ENCODE measurements at regions of chr1 and their contacts with region 1.

Region 1: DNA sequence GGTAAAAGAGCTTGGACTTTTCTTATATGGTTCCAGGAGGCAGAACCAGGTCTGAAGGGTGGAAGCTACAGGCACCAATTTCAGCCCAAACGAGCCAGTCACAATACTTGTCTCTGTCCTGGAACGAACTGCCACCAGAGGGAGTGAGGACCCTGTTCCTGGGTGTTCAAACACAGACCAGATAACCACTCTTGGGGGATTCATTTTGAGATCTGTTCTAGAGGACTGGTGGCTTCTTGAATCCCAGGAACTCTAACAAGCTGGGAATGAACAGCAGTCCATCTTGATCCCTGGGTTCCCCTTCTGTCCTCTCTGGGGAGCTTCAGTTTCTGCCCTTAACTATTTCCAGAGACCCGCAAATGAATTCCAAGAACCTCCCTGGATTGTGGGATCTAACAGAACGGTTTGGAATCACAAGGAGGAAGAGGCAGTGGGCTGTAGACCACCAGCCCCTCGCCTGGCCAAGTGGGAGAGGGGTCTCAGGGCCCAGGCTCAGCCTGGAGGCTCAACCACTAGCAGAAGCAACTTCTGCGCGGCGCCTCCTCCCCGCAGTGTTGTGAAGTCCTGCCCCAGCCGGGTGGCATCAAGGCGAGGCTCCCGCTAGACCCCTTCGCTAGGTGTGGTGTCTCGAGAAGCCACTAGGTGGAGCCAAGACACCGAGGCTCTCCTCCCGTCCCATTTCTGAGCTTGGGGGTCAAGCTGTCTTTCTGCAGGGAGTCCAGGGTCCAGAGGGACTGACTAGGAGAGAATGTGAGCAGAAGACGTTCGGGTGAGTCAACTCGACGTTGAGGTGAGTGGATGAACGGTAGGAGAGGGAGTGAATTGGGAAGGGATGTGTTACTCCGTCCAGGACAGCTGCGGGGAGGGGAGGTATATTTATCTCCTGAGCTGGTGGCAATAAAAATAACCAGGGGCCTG is 12.1 kb upstream of the NES start:
- DNase-seq: peak; percentile 90
- ATAC-seq: peak; percentile 51
- H3K4me3 Mint-ChIP-seq: peak overlapping the region; percentile 74
- H3K27ac Mint-ChIP-seq: peak overlapping the region; percentile 25; the same call in 1 of the 2 replicates
- H3K4me1 Mint-ChIP-seq: peaks cover 57% of the 10 kb centered on the region
- H3K27me3 Mint-ChIP-seq: peaks cover 7% of the 10 kb centered on the region; the same call in 1 of the 2 replicates
- CTCF ChIP-seq: peak; percentile 87

Region 2: DNA sequence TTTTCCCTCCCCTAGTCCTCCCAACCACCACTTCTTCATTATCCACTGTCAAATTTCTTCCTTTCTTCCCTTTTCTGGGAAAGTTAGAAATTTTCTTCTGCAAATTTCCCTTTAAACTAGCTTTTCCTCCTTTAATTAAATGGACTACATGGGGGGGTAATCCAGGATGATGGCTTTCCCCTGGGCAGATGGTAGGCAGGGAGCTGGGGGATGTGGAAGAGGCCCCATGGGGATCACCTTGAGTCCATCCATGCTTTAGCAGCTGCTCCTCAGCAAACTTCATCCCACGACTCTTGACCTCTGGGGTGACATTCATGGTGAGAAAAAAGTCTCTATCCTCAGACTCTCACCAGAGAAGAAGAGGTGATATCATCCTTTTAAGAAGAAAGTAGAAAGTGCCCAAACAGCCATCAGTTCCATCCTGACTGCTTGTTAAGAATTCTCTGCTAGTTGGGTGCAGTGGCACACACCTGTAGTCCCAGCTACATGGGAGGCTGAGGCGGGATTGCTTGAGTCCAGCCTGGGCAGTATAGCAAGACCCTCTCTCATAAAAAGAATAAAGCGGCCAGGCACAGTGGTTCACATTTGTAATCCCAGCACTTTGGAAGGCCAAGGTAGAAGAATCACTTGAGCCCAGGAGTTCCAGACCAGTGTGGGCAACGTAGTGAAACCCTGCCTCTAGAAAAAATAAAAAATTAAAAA is 90.4 kb before region 1 on chr1:
- CTCF ChIA-PET with region 1: no interaction called
- POLR2A ChIA-PET with region 1: no interaction called
- DNase-seq: no peak
- ATAC-seq: no peak
- H3K4me3 Mint-ChIP-seq: no peak overlapping the region
- H3K27ac Mint-ChIP-seq: no peak overlapping the region
- H3K4me1 Mint-ChIP-seq: peaks cover 13% of the 10 kb centered on the region
- H3K27me3 Mint-ChIP-seq: no peaks in the 10 kb centered on the region
- CTCF ChIP-seq: no peak

Region 3: DNA sequence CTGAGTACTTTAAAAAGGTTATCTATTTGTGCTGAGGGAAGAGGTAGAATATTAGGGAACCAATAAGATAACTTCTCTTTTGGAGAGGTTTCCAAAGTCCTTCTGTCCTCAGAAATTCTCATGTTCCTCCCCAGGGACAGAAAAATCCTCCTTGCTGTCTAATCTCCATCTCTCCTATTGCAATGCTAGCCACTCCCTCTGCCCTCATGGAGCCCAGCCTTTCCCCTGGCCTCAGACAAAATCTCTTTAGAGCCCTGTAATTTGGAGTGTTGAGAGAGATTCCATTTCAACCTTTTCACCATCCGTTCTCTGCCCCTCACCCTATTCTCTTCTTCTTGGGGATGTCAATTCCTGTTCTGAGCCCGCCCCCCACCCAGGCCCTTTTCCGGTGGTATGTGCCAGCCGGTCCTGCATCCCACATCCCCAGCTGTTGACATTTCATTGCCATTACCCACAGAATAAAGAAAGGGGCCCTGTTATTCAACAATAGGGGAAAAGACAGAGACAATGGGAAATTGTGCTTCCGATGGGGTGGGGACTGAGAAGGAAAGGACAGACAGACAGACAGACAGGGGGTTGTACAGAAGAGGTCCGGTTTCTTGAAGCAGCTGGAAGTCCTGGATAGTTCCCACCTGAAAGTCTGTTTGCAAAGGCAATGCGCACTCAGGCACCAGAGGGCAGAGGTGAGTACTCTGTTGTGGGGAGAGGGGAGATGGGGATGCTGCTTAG is 70.3 kb before region 1 on chr1 and contains the start of gene HAPLN2:
- CTCF ChIA-PET with region 1: interaction called, 54 read pairs
- POLR2A ChIA-PET with region 1: no interaction called
- DNase-seq: peak; percentile 79
- ATAC-seq: peak; percentile 86
- H3K4me3 Mint-ChIP-seq: no peak within 1 kb of the TSS
- H3K27ac Mint-ChIP-seq: no peak within 1 kb of the TSS
- H3K4me1 Mint-ChIP-seq: peaks cover 7% of the 10 kb centered on the region
- H3K27me3 Mint-ChIP-seq: peaks cover 58% of the 10 kb centered on the region
- CTCF ChIP-seq: no peak
- total RNA-seq, gene HAPLN2: 1.1 to 1.3 TPM (median 1.2 TPM) in 3 replicates

Region 4: GRCh38 chr1:156667610-156667967 is 21.7 kb before region 1 on chr1:
- CTCF ChIA-PET with region 1: interaction called, 437 read pairs
- POLR2A ChIA-PET with region 1: interaction called, 5 read pairs
- DNase-seq: no peak
- ATAC-seq: no peak
- H3K4me3 Mint-ChIP-seq: no peak overlapping the region
- H3K27ac Mint-ChIP-seq: peak overlapping the region; percentile 76
- H3K4me1 Mint-ChIP-seq: peaks cover 88% of the 10 kb centered on the region
- H3K27me3 Mint-ChIP-seq: peaks cover 4% of the 10 kb centered on the region; the same call in 1 of the 2 replicates
- CTCF ChIP-seq: no peak

Region 5: GRCh38 chr1:156740679-156741612 is 51.7 kb after region 1 on chr1 and contains the start of gene MRPL24:
- CTCF ChIA-PET with region 1: interaction called, 25 read pairs
- POLR2A ChIA-PET with region 1: interaction called, 7 read pairs
- DNase-seq: peak; percentile 98
- ATAC-seq: peak; percentile 86
- H3K4me3 Mint-ChIP-seq: peak within 1 kb of the TSS; percentile 90
- H3K27ac Mint-ChIP-seq: peak within 1 kb of the TSS; percentile 100
- H3K4me1 Mint-ChIP-seq: peaks cover 25% of the 10 kb centered on the region
- H3K27me3 Mint-ChIP-seq: no peaks in the 10 kb centered on the region
- CTCF ChIP-seq: no peak
- total RNA-seq, gene MRPL24: 35.1 to 37.4 TPM (median 35.2 TPM) in 3 replicates

Region 6: GRCh38 chr1:156797212-156797871 is 108.0 kb after region 1 on chr1:
- CTCF ChIA-PET with region 1: interaction called, 11 read pairs
- POLR2A ChIA-PET with region 1: no interaction called
- DNase-seq: peak; percentile 70
- ATAC-seq: peak; percentile 88
- H3K4me3 Mint-ChIP-seq: no peak overlapping the region
- H3K27ac Mint-ChIP-seq: no peak overlapping the region
- H3K4me1 Mint-ChIP-seq: no peaks in the 10 kb centered on the region
- H3K27me3 Mint-ChIP-seq: no peaks in the 10 kb centered on the region
- CTCF ChIP-seq: peak; percentile 69

Region 7: GRCh38 chr1:156860113-156860627 is 170.9 kb after region 1 on chr1:
- CTCF ChIA-PET with region 1: interaction called, 87 read pairs
- POLR2A ChIA-PET with region 1: interaction called, 5 read pairs
- DNase-seq: peak; percentile 76
- ATAC-seq: peak; percentile 63
- H3K4me3 Mint-ChIP-seq: peak overlapping the region; percentile 89
- H3K27ac Mint-ChIP-seq: no peak overlapping the region
- H3K4me1 Mint-ChIP-seq: peaks cover 10% of the 10 kb centered on the region
- H3K27me3 Mint-ChIP-seq: peaks cover 92% of the 10 kb centered on the region
- CTCF ChIP-seq: peak; percentile 53

Region 8: GRCh38 chr1:156920233-156921052 is 231.1 kb after region 1 on chr1 and contains the start of gene LRRC71:
- CTCF ChIA-PET with region 1: interaction called, 23 read pairs
- POLR2A ChIA-PET with region 1: interaction called, 3 read pairs
- DNase-seq: peak; percentile 94
- ATAC-seq: peak; percentile 89
- H3K4me3 Mint-ChIP-seq: peak within 1 kb of the TSS; percentile 67
- H3K27ac Mint-ChIP-seq: no peak within 1 kb of the TSS
- H3K4me1 Mint-ChIP-seq: peaks cover 15% of the 10 kb centered on the region
- H3K27me3 Mint-ChIP-seq: peaks cover 96% of the 10 kb centered on the region
- CTCF ChIP-seq: peak; percentile 94
- total RNA-seq, gene LRRC71: 0.18 to 0.30 TPM (median 0.22 TPM) in 3 replicates

Measured in WTC11 (cell line).